Gastrocnemius medialis (tissue), 4 donors: ENCODE measurements at regions of chr1 and their contacts with region 1.

Region 1: DNA sequence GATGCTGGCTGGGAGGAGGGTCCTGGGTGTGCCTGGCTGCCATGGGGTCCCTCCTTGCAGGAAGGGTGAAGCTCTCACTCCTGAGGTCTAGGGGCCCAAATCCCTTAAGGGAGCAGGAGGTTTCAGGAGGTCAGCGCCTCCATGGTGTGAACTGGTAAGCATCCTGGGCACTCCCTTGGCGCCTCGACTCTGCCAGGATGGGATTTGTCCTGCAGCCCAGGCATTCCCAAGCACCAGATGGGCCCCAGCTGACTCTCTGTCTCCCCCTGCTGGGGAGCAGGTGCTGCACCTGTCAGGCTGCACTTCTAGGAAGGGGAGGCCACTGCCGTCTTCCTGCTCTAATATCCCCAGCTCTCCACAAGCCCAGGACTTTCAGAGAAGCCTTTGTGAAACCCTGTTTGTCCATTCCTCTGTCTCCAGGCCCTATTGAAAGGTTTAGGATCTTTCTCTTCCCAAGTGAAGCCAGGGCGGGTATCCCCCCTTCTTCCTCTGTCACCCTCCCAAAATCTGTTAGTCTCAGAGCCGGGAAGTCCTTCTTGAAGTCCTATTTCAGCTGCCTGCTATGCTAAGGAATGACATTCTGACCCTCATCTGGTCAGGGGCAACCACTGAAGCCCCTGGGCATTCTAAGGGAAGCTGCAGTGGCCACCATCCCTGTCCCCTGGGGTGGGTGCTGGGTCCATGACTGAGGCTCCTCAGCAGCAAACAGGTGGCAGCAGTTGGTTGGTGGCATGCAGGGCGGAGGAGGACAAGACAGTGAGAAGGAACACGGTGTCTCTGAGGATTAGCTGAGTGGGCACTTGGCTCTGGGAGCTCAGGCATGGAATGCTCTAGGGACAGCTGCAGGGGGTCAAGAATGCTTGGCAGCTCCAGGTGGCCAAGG is 3.3 kb downstream of the MYBPH start:
- DNase-seq: peak; percentile 89 to 95
- ATAC-seq: peak; percentile 77 to 79
- H3K4me3 ChIP-seq: no peak overlapping the region
- H3K27ac ChIP-seq: peak overlapping the region; percentile 88 to 92 (median 88)
- H3K4me1 ChIP-seq: peaks cover 29 to 48% of the 10 kb centered on the region in 2 donors
- H3K27me3 ChIP-seq: no peaks in the 10 kb centered on the region
- CTCF ChIP-seq: peak; percentile 89 to 96 (median 89)
- POLR2A ChIP-seq: no peak

Region 2: GRCh38 chr1:203084588-203085502 is 87.5 kb before region 1 on chr1:
- in situ Hi-C with region 1: no loop called
- intact Hi-C with region 1: loop called (anchors 1 kb)
- DNase-seq: peak; percentile 32 to 89
- ATAC-seq: peak; percentile 37 to 55
- H3K4me3 ChIP-seq: peak overlapping the region; percentile 58 to 78 (median 67)
- H3K27ac ChIP-seq: peak overlapping the region; percentile 97 to 100 (median 98)
- H3K4me1 ChIP-seq: peaks cover 49 to 51% of the 10 kb centered on the region in 2 donors
- H3K27me3 ChIP-seq: no peaks in the 10 kb centered on the region
- CTCF ChIP-seq: peak; percentile 72 to 90 (median 88)
- POLR2A ChIP-seq: no peak

Region 3: GRCh38 chr1:203117611-203118575 is 54.5 kb before region 1 on chr1:
- in situ Hi-C with region 1: no loop called
- intact Hi-C with region 1: loop called (anchors 1 kb)
- DNase-seq: peak; percentile 60 to 73
- ATAC-seq: peak; percentile 77 to 90
- H3K4me3 ChIP-seq: peak overlapping the region in 2 of 4 donors; percentile 16 to 22
- H3K27ac ChIP-seq: no peak overlapping the region
- H3K4me1 ChIP-seq: peaks cover 6 to 9% of the 10 kb centered on the region in 2 donors
- H3K27me3 ChIP-seq: no peaks in the 10 kb centered on the region
- CTCF ChIP-seq: peak; percentile 72 to 90 (median 88)
- POLR2A ChIP-seq: no peak

Region 4: DNA sequence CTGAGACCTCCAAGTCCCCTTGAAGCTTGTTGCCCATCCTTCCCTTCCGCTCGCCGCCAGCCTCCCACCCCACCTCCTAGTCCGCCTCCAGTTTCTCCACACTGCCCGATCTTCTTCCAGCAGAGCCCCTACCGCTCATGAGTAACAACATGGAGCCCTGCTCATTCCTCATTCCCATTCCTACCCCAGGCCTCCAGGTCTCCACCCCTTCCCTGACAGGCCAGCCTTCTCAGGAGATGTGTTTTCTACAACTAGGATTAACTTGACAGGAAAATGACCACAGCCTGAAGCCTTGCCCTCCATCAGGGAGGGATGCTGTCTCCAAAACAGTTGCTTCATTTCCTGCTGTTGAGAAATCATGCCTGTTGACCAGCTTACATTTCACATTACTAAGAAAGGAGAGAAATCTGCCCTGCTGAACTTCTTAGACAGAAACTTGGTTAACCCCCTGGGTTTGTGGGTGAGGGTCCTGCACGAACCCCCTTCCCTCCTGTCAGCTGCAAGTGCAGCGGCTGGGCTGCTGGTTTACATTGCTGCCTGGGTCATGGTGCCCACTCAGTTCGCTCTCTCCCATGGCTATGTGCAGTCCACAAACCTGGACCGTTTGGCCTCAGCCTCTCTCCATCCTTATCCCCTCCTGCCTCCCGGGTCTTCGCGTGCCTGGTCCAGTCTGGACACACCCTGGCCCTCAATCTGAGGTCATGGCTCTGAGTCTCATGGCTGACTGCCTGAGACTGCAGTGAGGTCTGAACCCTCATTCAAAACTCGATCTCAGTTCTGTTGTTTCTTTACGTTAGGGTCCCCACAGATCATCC is 30.3 kb after region 1 on chr1:
- in situ Hi-C with region 1: no loop called
- intact Hi-C with region 1: loop called (anchors 1 kb)
- DNase-seq: peak; percentile 59 to 70
- ATAC-seq: peak; percentile 63 to 76
- H3K4me3 ChIP-seq: no peak overlapping the region
- H3K27ac ChIP-seq: peak overlapping the region; percentile 74 to 85 (median 83)
- H3K4me1 ChIP-seq: peaks cover 33 to 48% of the 10 kb centered on the region in 2 donors
- H3K27me3 ChIP-seq: no peaks in the 10 kb centered on the region
- CTCF ChIP-seq: no peak
- POLR2A ChIP-seq: peak in 1 of 2 donors; percentile 10

Region 5: DNA sequence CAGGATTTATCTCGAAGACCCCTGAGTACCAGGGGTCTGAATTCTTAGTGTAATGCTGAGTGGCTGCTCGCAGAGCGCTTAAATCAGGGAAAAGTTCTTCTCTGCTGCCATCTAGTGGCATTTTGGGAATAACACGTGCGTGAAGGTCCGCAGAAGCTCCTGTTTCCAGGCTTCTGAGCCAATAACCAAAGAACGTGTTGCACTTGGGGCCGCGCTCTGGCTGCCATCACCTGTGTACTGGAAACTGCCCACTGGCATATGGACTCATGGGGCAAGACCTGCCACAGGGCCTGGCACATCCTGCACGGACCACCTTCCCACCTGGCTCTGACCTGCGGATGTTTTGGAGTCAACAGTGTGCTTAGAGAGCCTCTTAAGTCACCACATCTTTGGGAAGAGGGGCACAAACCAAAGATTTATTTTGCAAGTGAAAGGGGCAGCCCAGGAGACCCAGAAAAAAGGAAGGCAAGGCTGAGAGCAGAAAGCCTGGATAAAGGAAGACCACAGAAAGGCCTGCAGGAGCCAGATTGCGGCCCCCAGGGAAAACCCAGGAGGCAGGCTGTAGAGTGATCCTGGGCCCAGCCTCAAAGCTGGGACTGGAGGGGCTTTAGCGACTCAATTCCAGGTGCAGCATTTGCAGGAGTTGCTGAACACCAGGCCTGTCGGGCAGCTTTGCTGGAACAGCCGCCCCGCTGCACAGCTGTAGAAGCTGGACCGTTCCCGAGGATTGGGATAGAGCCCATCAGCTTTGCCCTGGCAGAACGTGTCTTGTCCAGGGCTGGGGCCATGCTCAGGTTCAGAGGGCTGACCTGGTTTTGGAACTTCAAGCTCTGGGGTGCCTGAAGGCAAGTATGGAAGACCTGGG is 44.1 kb after region 1 on chr1:
- in situ Hi-C with region 1: loop called in 1 of 4 experiments (anchors 10 kb)
- intact Hi-C with region 1: loop called (anchors 1 kb)
- DNase-seq: peak; percentile 37 to 58
- ATAC-seq: peak; percentile 88 to 93
- H3K4me3 ChIP-seq: no peak overlapping the region
- H3K27ac ChIP-seq: no peak overlapping the region
- H3K4me1 ChIP-seq: peaks cover 3 to 8% of the 10 kb centered on the region in 2 donors
- H3K27me3 ChIP-seq: no peaks in the 10 kb centered on the region
- CTCF ChIP-seq: peak; percentile 74 to 88 (median 82)
- POLR2A ChIP-seq: no peak

Region 6: DNA sequence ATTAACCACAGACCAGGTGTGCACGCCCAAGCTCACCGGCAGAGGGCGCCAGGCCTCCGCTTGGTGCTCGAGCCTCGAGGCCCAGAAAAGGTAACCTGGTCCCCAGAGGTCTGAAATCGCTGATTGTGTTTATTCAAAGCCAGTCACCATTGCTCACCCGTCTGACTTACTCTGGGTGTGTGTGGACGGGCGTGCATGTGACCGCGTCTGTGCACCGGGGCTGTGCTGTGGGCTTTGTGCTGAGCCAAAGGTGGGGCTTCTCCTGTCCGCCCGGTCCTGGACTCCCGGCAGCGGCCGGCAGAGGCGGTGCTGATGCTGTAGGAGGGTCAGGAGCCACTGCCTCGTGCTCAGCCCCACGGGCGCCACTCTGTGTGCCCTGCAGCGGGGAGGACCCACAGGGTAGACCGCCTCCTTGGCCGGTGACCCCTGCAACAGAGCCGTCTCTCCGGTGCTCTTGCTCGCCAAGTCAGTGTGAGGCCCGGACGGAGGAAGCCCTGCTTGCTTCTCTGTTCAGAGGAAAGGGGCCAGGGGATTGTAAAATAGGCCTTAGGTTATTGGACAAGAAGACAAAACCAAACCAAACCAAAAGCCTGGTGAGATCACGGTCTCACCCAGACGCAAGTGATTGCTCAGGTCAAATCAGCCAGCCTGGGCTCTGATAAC is 101.0 kb after region 1 on chr1:
- in situ Hi-C with region 1: no loop called
- intact Hi-C with region 1: no loop called
- DNase-seq: peak; percentile 72 to 86
- ATAC-seq: peak; percentile 33 to 42
- H3K4me3 ChIP-seq: peak overlapping the region; percentile 31 to 43 (median 38)
- H3K27ac ChIP-seq: peak overlapping the region; percentile 92 to 96 (median 94)
- H3K4me1 ChIP-seq: peaks cover 82 to 83% of the 10 kb centered on the region in 2 donors
- H3K27me3 ChIP-seq: no peaks in the 10 kb centered on the region
- CTCF ChIP-seq: peak; percentile 99 to 100 (median 100)
- POLR2A ChIP-seq: peak; percentile 23 to 52